Prostate gland (tissue), 2 donors: ENCODE measurements at regions of chr14 and their contacts with region 1.

Region 1: GRCh38 chr14:81453166-81453766 is 53.1 kb upstream of the STON2 start:
- DNase-seq: peak; percentile 50
- H3K4me3 ChIP-seq: no peak overlapping the region
- H3K27ac ChIP-seq: no peak overlapping the region
- H3K4me1 ChIP-seq: no peaks in the 10 kb centered on the region
- H3K27me3 ChIP-seq: no peaks in the 10 kb centered on the region
- CTCF ChIP-seq: peak; percentile 74 to 90 (median 84)
- POLR2A ChIP-seq: no peak

Region 2: GRCh38 chr14:81269100-81269978 is 183.9 kb before region 1 on chr14:
- intact Hi-C with region 1: loop called (anchors 2 kb)
- DNase-seq: peak; percentile 50
- H3K4me3 ChIP-seq: no peak overlapping the region
- H3K27ac ChIP-seq: no peak overlapping the region
- H3K4me1 ChIP-seq: no peaks in the 10 kb centered on the region
- H3K27me3 ChIP-seq: no peaks in the 10 kb centered on the region
- CTCF ChIP-seq: peak; percentile 75 to 90 (median 84)
- POLR2A ChIP-seq: no peak